ENCODE measurements at regions of chr1 and their contacts with region 1.

Region 1: DNA sequence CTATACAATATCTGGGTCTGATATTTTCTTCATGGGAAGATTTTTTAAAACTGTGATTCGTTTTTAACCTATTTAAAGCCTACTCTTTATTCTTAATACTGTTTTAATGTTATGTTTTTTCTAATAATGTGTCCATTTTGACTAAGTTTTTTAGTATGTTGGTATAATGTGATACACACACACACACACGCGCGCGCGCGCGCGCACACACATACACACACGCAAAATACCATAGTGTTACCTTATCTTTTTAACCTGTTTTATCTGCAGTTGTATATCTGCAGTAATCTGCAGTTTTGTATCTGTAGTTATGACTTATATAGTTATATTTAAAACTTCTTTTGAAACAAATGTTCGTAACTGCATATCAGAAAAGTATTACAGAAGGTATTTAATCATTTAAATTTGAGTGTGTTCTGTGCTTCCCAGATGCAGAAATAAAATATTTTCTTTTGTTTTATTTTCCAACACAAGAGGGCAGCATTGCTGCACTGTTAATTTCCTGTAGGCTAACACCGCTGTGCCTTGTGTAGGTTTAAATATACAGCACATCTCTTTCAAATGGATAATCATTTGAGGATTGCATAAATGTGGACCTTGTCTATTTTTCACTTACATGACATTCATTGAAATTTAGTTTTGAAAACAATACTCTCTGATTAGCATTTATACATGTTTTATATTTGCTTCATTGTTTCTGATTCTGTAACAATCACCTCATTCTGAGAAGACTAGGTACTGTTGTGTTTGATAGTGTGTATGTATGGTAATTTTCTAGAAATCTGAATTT is 166.1 kb downstream of the PDE4B start:
- DNase-seq: no peak
- H3K4me3 ChIP-seq: no peak overlapping the region
- H3K27ac ChIP-seq: no peak overlapping the region
- H3K4me1 ChIP-seq: peaks cover 0 to 30% (median 13%) of the 10 kb centered on the region in 4 donors
- H3K27me3 ChIP-seq: no peaks in the 10 kb centered on the region
- CTCF ChIP-seq: peak; percentile 67 to 82 (median 76)
- EP300 ChIP-seq: no peak
- POLR2A ChIP-seq: no peak

Region 2: DNA sequence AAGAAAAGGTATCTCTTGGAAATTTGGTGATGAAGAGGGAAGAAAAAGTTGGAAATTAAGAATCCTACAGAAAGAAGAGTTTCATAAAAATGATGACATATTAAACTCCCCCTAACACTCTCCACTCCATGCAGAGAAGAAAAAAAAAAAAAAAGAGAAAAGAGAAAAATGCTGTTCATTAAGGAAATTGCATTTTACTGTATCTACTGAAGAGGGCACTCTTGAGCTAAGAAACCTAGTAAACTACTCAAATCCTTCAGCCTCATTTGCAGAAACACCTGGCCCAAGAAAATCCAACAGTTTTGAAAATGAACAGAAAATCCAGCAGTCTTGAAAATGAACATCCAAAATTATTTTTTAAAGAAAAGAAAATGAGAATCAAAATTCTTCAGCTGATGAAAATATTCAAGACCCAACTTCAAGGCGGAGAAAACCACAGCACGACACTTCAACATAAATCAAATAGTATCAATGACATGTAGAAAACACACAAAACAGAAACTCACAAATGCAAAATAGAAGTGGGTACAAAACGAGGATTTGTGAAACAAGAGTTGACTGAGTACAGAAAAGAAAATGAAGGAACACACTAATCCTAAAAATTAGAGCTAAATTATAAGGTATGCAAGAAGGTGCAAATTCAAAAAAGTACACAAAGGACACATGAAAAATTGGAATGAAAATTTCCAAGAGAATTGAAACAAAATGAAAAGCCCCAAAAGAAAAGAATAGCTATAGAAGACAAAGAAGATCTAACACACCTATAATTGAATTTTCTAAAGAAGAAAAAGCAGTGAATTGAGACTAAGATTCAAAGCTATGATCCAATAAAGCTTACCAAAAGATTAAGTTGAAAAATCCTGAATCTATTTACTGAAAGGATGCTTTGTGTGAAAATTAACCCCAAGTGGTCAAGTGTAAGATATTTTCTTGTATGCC is 722.6 kb before region 1 on chr1:
- in situ Hi-C with region 1: loop called in 1 of 4 experiments (anchors 25 kb)
- intact Hi-C with region 1: no loop called
- DNase-seq: no peak
- H3K4me3 ChIP-seq: no peak overlapping the region
- H3K27ac ChIP-seq: no peak overlapping the region
- H3K4me1 ChIP-seq: no peaks in the 10 kb centered on the region
- H3K27me3 ChIP-seq: no peaks in the 10 kb centered on the region
- CTCF ChIP-seq: peak; percentile 40 to 64 (median 44)
- EP300 ChIP-seq: no peak
- POLR2A ChIP-seq: no peak

Region 3: DNA sequence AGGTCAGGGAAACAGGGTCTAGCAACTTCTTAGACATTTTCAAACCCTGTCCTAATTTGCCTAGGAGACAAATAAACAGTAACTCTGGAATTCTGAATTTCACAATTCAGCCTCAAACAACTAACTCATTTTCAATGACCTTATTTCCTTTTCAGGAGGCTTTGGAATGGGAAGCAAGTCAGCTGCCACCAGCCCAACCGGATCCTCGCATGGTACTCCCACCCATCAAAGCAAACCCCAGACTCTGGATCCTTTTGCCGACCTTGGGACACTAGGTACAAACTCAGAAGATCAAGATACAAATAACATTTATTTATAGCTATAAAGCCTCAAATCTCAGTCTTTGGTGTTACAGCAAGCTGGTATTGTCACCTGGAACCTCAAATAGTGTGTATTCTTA is 557.1 kb before region 1 on chr1:
- in situ Hi-C with region 1: no loop called
- intact Hi-C with region 1: no loop called
- DNase-seq: no peak
- H3K4me3 ChIP-seq: no peak overlapping the region
- H3K27ac ChIP-seq: no peak overlapping the region
- H3K4me1 ChIP-seq: no peaks in the 10 kb centered on the region
- H3K27me3 ChIP-seq: no peaks in the 10 kb centered on the region
- CTCF ChIP-seq: no peak
- EP300 ChIP-seq: no peak
- POLR2A ChIP-seq: no peak

Region 4: GRCh38 chr1:65792669-65793358 is 165.9 kb before region 1 on chr1 and contains the start of gene PDE4B:
- in situ Hi-C with region 1: no loop called
- intact Hi-C with region 1: no loop called
- DNase-seq: peak; percentile 24
- H3K4me3 ChIP-seq: peak within 1 kb of the TSS in 3 of 4 donors; percentile 30 to 52 (median 34)
- H3K27ac ChIP-seq: no peak within 1 kb of the TSS
- H3K4me1 ChIP-seq: peaks cover 0 to 17% (median 5%) of the 10 kb centered on the region in 4 donors
- H3K27me3 ChIP-seq: peaks cover 50% of the 10 kb centered on the region
- CTCF ChIP-seq: no peak
- EP300 ChIP-seq: no peak
- POLR2A ChIP-seq: no peak
- total RNA-seq, gene PDE4B: 4.5 to 14.8 (median 6.5) TPM

Region 5: DNA sequence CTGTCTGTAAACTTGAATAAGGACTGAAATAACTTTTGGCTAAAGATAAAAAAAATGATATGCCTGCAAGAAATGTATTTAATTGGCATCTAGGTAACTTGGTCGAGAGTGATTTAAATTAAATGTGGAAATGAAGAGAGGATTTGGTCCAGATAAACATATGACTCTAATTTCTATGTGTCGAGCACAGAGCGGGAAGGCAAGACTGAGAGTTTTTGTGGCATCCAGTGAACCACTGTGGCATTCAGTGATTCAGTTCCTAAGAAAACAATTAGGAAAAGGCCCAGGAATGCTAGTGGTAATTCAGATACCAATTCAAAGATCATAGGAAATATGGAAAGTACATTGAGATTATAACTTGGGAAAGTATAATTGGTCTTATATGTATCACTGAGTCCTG is 126.5 kb before region 1 on chr1:
- in situ Hi-C with region 1: no loop called
- intact Hi-C with region 1: no loop called
- DNase-seq: no peak
- H3K4me3 ChIP-seq: no peak overlapping the region
- H3K27ac ChIP-seq: no peak overlapping the region
- H3K4me1 ChIP-seq: no peaks in the 10 kb centered on the region
- H3K27me3 ChIP-seq: no peaks in the 10 kb centered on the region
- CTCF ChIP-seq: no peak
- EP300 ChIP-seq: no peak
- POLR2A ChIP-seq: no peak

Region 6: DNA sequence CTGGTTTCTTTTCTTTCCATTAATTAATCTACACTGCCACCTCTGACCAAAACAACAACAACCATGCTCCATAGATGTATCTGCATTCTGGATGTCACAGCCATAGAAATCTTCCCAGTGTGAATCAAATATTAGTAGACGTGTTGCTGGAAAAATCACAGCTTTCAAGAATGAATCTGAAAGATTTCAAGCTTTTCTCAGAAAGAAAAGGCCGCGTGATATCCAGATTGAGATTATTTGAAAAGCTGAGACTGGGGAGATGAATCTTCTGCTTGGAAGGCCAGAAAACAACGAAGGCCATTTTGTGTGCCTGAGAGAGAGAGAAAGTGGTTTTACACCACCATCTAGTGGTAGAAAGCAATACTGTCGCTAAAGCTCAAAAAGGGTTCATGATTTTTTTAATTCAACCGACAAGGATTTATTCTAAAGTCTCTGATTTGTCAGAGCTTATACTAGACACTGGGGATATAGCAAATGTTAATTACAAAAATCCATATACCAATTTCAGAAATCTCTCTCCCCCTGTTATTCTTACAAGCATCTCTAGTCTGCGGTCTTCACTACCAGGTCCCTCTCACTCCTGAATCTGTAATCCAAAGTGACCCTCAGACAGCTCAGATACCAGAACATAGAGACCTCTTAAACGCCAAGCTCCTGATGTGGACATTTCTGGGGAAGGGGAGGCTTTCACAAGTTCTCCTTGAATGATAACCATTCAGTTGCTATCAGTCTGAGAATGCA is 487.7 kb after region 1 on chr1:
- in situ Hi-C with region 1: loop called in 3 of 4 experiments (anchors 10 to 25 kb)
- intact Hi-C with region 1: loop called (anchors 10 kb)
- DNase-seq: no peak
- H3K4me3 ChIP-seq: no peak overlapping the region
- H3K27ac ChIP-seq: peak overlapping the region; percentile 47 to 78 (median 68)
- H3K4me1 ChIP-seq: peaks cover 0 to 30% (median 7%) of the 10 kb centered on the region in 4 donors
- H3K27me3 ChIP-seq: no peaks in the 10 kb centered on the region
- CTCF ChIP-seq: peak; percentile 81 to 96 (median 85)
- EP300 ChIP-seq: no peak
- POLR2A ChIP-seq: no peak

Region 7: DNA sequence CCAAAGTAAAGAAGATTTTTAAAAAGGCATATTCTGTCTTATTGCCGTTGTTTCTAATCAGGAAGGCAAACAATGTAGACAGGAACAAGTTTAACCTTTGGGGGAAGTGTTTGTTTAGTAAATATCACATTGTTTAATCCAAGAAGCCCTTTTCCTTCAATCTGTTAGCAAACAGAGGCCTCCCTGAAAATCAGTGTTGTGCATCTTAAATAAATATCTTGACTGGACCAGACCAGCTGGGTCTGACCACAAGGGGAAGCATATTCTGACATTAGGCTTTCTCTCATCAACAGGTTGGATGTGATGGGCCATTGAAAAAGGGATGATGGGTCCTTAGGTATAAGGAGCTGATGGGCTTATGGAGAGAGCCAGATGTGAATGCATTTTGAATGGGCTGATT is 493.4 kb after region 1 on chr1:
- in situ Hi-C with region 1: loop called in 3 of 4 experiments (anchors 10 to 25 kb)
- intact Hi-C with region 1: loop called (anchors 10 kb)
- DNase-seq: no peak
- H3K4me3 ChIP-seq: no peak overlapping the region
- H3K27ac ChIP-seq: no peak overlapping the region
- H3K4me1 ChIP-seq: peaks cover 0 to 16% (median 0%) of the 10 kb centered on the region in 4 donors
- H3K27me3 ChIP-seq: no peaks in the 10 kb centered on the region
- CTCF ChIP-seq: no peak
- EP300 ChIP-seq: no peak
- POLR2A ChIP-seq: no peak

Region 8: DNA sequence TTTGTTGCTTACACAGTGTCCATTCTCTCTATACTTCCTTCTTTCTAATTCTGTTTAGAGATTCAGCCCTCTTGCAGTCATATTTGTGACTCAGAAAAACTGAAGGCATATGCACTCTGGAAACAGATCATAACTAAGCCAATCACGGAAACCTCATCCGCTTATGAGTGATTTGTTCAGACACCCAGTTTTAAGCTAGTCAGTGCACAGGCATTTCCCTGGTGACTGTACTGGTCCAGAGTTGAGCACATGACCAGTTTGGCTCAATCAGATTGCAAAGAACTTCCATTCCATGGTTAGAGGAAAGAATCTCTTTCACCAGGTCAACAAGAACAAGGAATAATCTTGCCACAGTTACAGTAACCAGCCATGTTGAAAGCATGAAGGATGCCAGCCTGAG is 506.0 kb after region 1 on chr1:
- in situ Hi-C with region 1: loop called in 1 of 4 experiments (anchors 25 kb)
- intact Hi-C with region 1: no loop called
- DNase-seq: no peak
- H3K4me3 ChIP-seq: no peak overlapping the region
- H3K27ac ChIP-seq: no peak overlapping the region
- H3K4me1 ChIP-seq: no peaks in the 10 kb centered on the region
- H3K27me3 ChIP-seq: no peaks in the 10 kb centered on the region
- CTCF ChIP-seq: no peak
- EP300 ChIP-seq: no peak
- POLR2A ChIP-seq: no peak

Measured in transverse colon (tissue), 4 donors.